Panc1 (cell line): ENCODE measurements at regions of chr12 and their contacts with region 1.

Region 1: GRCh38 chr12:62631471-62632410 is 165.1 kb downstream of the MON2 start:
- DNase-seq: peak; percentile 10
- ATAC-seq: peak; percentile 93
- H3K4me3 ChIP-seq: peak overlapping the region; percentile 55 to 71
- H3K27ac ChIP-seq: peak overlapping the region; percentile 67
- H3K4me1 ChIP-seq: peaks cover 13% of the 10 kb centered on the region
- H3K27me3 ChIP-seq: no peaks in the 10 kb centered on the region
- CTCF ChIP-seq: peak; percentile 83

Region 2: GRCh38 chr12:62660756-62661155 is 29.0 kb after region 1 on chr12:
- CTCF ChIA-PET with region 1: no interaction called
- POLR2A ChIA-PET with region 1: interaction called, 13 read pairs
- in situ Hi-C with region 1: no loop called
- intact Hi-C with region 1: no loop called
- DNase-seq: no peak
- ATAC-seq: no peak
- H3K4me3 ChIP-seq: no peak overlapping the region
- H3K27ac ChIP-seq: no peak overlapping the region
- H3K4me1 ChIP-seq: no peaks in the 10 kb centered on the region
- H3K27me3 ChIP-seq: no peaks in the 10 kb centered on the region
- CTCF ChIP-seq: no peak

Region 3: DNA sequence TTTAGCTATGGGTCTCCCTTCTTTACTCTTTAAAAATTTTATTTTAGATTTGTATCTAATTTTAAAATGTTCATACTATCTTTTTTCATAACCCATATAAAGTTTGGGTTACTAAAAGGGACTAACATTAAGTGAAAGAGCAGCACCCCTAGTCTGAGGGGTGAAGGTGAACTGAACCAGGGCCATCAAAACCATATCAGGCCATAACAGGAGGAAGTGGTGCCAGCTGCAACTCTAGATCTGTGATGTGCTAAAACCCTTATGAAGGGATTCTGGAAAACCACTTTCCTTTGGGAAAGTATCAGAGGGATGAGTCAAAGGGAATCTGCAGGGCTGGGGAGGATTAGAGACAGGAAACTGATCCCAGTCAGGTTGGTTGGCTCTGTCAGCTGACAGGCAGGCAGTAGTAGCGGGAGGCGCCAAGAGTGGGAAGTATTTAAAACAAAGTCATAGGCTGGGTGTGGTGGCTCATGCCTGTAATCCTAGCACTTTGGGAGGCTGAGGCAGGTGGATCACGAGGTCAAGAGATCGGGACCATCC is 140.7 kb after region 1 on chr12:
- CTCF ChIA-PET with region 1: no interaction called
- POLR2A ChIA-PET with region 1: no interaction called
- in situ Hi-C with region 1: no loop called
- intact Hi-C with region 1: no loop called
- DNase-seq: no peak
- ATAC-seq: no peak
- H3K4me3 ChIP-seq: no peak overlapping the region
- H3K27ac ChIP-seq: no peak overlapping the region
- H3K4me1 ChIP-seq: no peaks in the 10 kb centered on the region
- H3K27me3 ChIP-seq: no peaks in the 10 kb centered on the region
- CTCF ChIP-seq: no peak